ENCODE measurements at regions of chr4 and their contacts with region 1.

Region 1: GRCh38 chr4:89110986-89111832 is at the start of gene TIGD2:
- DNase-seq: peak; percentile 90
- H3K4me3 Mint-ChIP-seq: peak within 1 kb of the TSS; percentile 74
- H3K27ac Mint-ChIP-seq: no peak within 1 kb of the TSS
- H3K4me1 Mint-ChIP-seq: peaks cover 15% of the 10 kb centered on the region
- H3K27me3 Mint-ChIP-seq: peaks cover 11% of the 10 kb centered on the region
- total RNA-seq, gene TIGD2: 1.1 to 1.4 TPM

Region 2: GRCh38 chr4:88533937-88534750 is 577.1 kb before region 1 on chr4:
- CTCF ChIA-PET with region 1: no interaction called
- POLR2A ChIA-PET with region 1: no interaction called
- intact Hi-C with region 1: loop called (anchors 5 kb)
- DNase-seq: no peak
- H3K4me3 Mint-ChIP-seq: no peak overlapping the region
- H3K27ac Mint-ChIP-seq: no peak overlapping the region
- H3K4me1 Mint-ChIP-seq: peaks cover 26% of the 10 kb centered on the region
- H3K27me3 Mint-ChIP-seq: no peaks in the 10 kb centered on the region

Region 3: GRCh38 chr4:88823058-88823919 is 287.9 kb before region 1 on chr4:
- CTCF ChIA-PET with region 1: interaction called, 3 read pairs
- POLR2A ChIA-PET with region 1: no interaction called
- intact Hi-C with region 1: loop called (anchors 1 kb)
- DNase-seq: peak; percentile 79
- H3K4me3 Mint-ChIP-seq: peak overlapping the region; percentile 87
- H3K27ac Mint-ChIP-seq: peak overlapping the region; percentile 84
- H3K4me1 Mint-ChIP-seq: peaks cover 37% of the 10 kb centered on the region
- H3K27me3 Mint-ChIP-seq: no peaks in the 10 kb centered on the region

Region 4: DNA sequence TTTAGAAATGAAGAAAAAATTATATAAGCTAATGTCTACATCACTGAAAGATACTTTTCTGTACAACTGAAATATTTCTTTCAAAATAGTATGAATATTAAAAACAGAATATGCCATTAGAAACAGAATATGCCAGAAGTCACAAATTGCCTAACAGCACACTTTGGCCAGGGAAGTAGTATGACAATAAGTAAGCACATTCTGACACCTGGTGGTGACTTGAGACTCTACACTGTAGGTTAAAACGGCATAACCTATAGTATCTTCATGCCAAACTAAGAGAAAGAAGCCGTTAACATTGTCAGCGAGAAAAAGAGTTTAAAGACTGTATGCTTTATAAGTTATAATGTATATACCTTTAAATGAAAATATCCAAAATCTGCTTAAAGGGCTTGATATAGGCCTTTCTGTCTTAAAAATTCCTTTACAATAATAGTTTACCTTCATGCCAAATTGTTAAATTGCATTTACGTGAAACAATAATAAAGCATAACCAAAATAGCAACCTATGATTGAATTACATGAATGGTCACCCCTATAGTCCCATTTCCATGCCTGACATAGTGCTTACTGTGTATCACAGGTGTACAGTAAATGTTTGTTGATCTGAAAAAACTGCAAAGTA is 87.0 kb before region 1 on chr4:
- CTCF ChIA-PET with region 1: no interaction called
- POLR2A ChIA-PET with region 1: no interaction called
- intact Hi-C with region 1: loop called (anchors 1 kb)
- DNase-seq: peak; percentile 33
- H3K4me3 Mint-ChIP-seq: no peak overlapping the region
- H3K27ac Mint-ChIP-seq: no peak overlapping the region
- H3K4me1 Mint-ChIP-seq: peaks cover 5% of the 10 kb centered on the region
- H3K27me3 Mint-ChIP-seq: no peaks in the 10 kb centered on the region

Region 5: GRCh38 chr4:89681215-89681614 is 570.0 kb after region 1 on chr4:
- CTCF ChIA-PET with region 1: no interaction called
- POLR2A ChIA-PET with region 1: no interaction called
- intact Hi-C with region 1: no loop called
- DNase-seq: no peak
- H3K4me3 Mint-ChIP-seq: no peak overlapping the region
- H3K27ac Mint-ChIP-seq: no peak overlapping the region
- H3K4me1 Mint-ChIP-seq: peaks cover 4% of the 10 kb centered on the region
- H3K27me3 Mint-ChIP-seq: peaks cover 6% of the 10 kb centered on the region

Region 6: DNA sequence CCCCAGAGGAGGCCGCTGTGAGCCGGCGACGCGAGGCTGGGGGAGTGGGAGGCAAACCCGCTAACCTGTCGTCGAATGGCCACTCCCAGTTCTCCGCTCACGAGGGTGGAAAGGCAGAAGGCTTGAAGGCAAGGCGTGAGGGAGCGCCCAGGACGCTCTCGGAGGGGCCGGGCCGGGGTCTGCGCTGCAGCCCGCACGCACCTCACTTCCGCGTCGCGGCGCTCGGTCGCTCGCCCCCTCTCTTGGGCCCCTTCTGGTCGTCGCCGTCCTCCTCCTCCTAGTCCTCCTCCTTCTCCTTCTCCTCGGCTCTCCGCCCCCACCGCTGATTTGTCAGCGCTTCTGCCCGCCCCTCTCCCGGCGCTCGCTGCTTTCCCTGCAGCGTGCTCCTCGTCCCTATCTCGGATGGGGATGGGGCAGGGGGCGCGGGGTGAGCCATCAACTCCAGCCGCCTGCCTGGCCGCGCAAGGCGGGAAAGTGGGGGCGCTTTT is 725.7 kb after region 1 on chr4 and contains the start of gene SNCA:
- CTCF ChIA-PET with region 1: no interaction called
- POLR2A ChIA-PET with region 1: no interaction called
- intact Hi-C with region 1: loop called (anchors 5 kb)
- DNase-seq: peak; percentile 71
- H3K4me3 Mint-ChIP-seq: peak within 1 kb of the TSS; percentile 74
- H3K27ac Mint-ChIP-seq: no peak within 1 kb of the TSS
- H3K4me1 Mint-ChIP-seq: peaks cover 22% of the 10 kb centered on the region
- H3K27me3 Mint-ChIP-seq: peaks cover 46% of the 10 kb centered on the region
- total RNA-seq, gene SNCA: 2.0 to 2.5 TPM

Region 7: DNA sequence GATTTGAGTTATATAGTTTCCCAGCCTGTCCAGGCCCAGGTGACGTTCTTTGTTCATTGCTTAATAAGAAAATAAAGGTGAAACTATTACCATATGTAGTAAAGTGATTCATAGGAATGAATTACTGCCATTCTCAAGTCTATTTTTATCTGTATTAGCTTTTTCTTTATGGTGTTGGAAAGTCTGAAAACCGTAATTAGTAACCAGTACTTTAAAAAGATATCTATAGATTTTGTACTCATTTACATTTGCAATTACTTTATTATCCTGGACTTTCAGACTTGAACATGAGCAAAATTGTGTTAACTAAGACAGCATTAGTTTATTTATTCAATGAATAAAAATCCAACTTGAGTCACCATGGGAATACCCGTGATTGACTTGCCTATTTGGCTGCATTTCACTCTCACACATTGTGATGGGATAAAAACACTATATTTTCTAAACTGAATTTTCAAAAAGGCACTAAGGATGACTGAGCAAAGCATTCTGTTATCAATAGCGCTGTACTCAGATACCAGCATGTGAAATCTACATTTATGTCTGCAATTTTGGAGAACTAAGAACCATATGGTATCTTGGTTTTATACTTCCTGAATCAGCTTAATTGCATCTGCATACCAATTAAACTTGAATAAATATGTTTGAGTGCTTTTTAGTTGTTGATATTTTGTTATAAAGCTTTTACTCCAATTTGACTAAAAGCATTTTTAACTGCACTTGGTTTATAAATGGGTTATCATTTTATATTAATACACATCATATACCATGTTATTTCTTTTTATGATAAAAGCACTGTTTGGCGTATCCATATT is 1170.5 kb after region 1 on chr4:
- CTCF ChIA-PET with region 1: no interaction called
- POLR2A ChIA-PET with region 1: no interaction called
- intact Hi-C with region 1: no loop called
- DNase-seq: no peak
- H3K4me3 Mint-ChIP-seq: no peak overlapping the region
- H3K27ac Mint-ChIP-seq: no peak overlapping the region
- H3K4me1 Mint-ChIP-seq: no peaks in the 10 kb centered on the region
- H3K27me3 Mint-ChIP-seq: no peaks in the 10 kb centered on the region

Measured in activated CD4-positive, alpha-beta memory T cell treated with anti-CD3 and anti-CD28 coated beads for 36 hours (primary cell).